Dendritic cell treated with granulocyte-macrophage colony-stimulating factor and Interleukin-4, amounts not matched to agents 40 ng/mL and 50 ng/mL, for 4 days (primary cell): ENCODE measurements at regions of chr5 and their contacts with region 1.

Region 1: DNA sequence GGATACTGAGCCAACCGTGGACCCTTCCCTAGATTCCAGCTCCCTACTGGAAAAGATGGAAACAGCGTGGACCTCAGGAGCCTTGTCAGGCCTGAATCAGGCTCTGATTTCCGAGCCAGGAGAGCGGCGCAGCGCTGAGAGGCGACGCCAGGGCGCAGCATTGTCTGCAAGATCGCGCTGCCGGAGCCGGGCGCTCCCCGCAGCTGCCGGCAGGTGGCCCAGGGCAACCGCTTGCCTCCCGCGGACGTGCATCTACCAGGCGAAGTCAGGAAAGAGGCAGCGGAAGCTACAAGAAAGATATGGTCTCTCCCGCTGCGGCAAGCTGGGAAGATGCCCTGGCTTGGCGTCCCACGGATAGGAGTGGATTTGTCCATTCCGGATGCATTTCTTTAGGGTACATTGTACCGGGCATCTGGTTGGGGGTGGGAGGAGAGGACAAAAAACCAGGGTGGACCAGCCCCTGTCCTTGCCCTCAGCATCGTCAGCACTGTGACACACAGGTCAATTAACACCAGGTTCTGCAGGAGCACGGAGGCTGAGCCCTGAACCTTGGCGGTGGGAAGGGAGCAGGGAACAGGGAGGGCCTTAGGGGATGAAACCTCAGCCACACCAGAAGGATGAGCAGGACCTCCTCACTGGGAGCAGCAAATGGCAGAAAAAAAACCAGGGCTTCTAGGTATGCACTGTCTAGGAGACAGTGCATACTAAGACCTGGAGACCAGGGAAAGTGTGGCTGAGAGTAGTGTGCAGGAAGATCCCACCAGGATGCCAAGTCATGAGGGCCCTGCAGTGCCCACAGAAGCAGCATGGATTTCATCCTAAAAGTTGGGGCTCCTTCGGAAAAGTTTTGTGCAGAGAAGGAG is 55.9 kb downstream of the SFXN1 start:
- H3K4me3 Mint-ChIP-seq: peak overlapping the region; percentile 53
- H3K27ac Mint-ChIP-seq: peak overlapping the region; percentile 65
- H3K4me1 Mint-ChIP-seq: peaks cover 28% of the 10 kb centered on the region
- H3K27me3 Mint-ChIP-seq: peaks cover 6% of the 10 kb centered on the region

Region 2: GRCh38 chr5:175718401-175719108 is 184.3 kb after region 1 on chr5:
- intact Hi-C with region 1: loop called (anchors 2 kb)
- H3K4me3 Mint-ChIP-seq: no peak overlapping the region
- H3K27ac Mint-ChIP-seq: no peak overlapping the region
- H3K4me1 Mint-ChIP-seq: peaks cover 10% of the 10 kb centered on the region
- H3K27me3 Mint-ChIP-seq: peaks cover 4% of the 10 kb centered on the region